Aorta (tissue), 5 donors: ENCODE measurements at regions of chr15 and their contacts with region 1.

Region 1: DNA sequence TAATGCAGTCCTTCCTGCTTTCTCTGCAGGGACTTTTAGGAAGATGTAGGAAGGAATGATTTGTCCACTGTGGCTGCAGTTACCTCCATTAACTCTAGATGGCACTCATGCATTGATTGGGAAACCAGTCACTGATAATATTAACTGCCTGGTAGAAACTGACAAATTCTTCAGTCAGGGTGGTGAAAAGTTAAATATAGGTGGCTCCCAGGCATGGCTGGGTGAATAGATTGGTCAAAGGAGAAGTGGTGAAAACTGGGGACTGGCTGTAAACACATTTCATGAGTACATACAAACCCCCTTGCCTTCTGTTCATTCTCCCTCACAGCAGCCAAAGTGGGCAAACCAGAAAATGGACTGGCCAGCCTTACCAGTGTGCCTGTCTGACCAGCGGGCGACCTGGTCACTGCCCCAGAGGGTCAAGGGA is 333.4 kb downstream of the THSD4 start:
- DNase-seq: no peak
- ATAC-seq: peak; percentile 80
- H3K4me3 ChIP-seq: no peak overlapping the region
- H3K27ac ChIP-seq: no peak overlapping the region
- H3K4me1 ChIP-seq: peaks cover 0 to 5% of the 10 kb centered on the region in 2 donors
- H3K27me3 ChIP-seq: no peaks in the 10 kb centered on the region

Region 2: DNA sequence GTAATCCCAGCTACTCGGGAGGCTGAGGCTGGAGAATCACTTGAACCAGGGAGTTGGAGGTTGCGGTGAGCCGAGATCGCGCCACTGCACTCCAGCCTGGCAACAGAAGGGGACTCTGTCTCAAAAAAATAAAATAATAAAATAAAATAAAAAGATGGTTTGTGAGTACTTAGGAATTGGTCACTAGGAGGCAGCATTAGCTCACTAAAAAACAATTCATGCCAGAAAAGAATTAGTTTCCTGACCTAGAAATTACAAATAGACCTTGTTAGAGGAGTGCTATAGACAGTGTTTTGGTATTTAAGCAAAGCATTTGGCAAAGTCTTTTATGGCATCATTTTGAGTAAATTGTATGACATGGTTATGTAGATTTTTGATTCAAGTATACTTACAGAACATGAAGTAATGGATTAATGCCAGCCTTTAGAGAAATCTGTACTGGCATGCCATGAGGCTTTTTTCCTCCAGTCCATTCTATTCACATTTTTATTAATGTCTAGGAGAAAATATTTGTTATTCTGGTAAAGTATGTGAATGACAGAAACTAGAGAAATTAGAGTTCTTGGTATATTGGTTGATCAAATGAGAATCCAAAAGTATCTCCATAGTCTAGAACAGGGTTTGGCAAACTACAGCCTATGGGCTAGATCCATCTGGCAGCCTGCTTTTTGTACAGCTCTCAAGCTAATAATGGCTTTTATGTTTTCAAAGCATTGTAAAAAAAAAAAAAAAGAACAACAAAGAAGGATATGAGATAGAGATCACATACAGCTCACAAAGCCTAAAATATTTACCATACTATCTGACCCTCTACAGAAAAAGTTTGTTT is 474.5 kb before region 1 on chr15:
- intact Hi-C with region 1: loop called in 1 of 2 experiments (anchors 10 kb)
- DNase-seq: no peak
- ATAC-seq: no peak
- H3K4me3 ChIP-seq: no peak overlapping the region
- H3K27ac ChIP-seq: no peak overlapping the region
- H3K4me1 ChIP-seq: no peaks in the 10 kb centered on the region
- H3K27me3 ChIP-seq: no peaks in the 10 kb centered on the region

Region 3: GRCh38 chr15:71011503-71012155 is 437.1 kb before region 1 on chr15:
- intact Hi-C with region 1: loop called in 1 of 2 experiments (anchors 10 kb)
- DNase-seq: no peak
- ATAC-seq: no peak
- H3K4me3 ChIP-seq: no peak overlapping the region
- H3K27ac ChIP-seq: no peak overlapping the region
- H3K4me1 ChIP-seq: no peaks in the 10 kb centered on the region
- H3K27me3 ChIP-seq: no peaks in the 10 kb centered on the region

Region 4: GRCh38 chr15:71465131-71465530 is 16.4 kb after region 1 on chr15:
- intact Hi-C with region 1: no loop called
- DNase-seq: no peak
- ATAC-seq: no peak
- H3K4me3 ChIP-seq: no peak overlapping the region
- H3K27ac ChIP-seq: no peak overlapping the region
- H3K4me1 ChIP-seq: no peaks in the 10 kb centered on the region
- H3K27me3 ChIP-seq: no peaks in the 10 kb centered on the region

Region 5: DNA sequence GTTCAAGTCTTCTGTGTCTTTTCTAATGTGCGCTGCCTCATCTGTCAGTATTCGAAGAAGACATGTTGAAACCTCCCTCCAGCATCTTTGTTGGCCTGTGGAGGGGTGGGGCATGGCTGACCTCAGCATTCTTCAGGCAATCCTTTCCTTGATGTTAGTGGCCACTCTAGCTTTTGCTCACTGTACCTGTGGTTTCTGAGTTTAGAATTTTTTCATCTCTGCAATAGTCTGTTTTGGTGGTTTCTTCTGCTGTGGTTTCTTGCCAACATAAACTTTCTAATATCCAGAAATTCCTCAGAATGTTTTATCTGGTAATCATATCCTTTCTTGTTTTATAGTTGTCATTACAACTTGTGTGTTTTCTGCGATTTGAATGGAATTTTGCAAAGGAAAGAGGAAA is 110.4 kb after region 1 on chr15:
- intact Hi-C with region 1: no loop called
- DNase-seq: no peak
- ATAC-seq: no peak
- H3K4me3 ChIP-seq: no peak overlapping the region
- H3K27ac ChIP-seq: no peak overlapping the region
- H3K4me1 ChIP-seq: peaks cover 0 to 2% of the 10 kb centered on the region in 2 donors
- H3K27me3 ChIP-seq: no peaks in the 10 kb centered on the region

Region 6: DNA sequence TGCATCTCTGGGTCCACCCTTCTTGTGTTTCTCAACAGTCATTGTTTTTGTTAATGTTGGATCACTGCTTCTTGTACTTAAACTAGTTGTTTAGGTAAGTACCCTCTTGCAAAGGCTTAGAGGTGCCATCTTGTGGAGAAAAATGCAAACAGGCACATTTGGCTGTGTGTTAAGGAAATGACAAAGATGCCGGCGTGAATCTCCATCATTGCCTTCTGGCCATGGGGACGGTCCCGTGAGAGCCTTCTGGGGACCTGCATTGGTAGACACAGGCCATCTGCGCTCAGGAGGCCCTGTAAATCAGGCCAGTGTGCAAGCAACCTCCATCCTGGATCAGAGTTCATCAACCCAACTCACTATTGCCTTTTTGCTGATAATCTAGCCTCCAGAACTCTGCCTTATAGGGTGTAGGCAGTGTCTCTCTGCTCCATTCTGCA is 203.1 kb after region 1 on chr15:
- intact Hi-C with region 1: loop called (anchors 2 to 5 kb)
- DNase-seq: no peak
- ATAC-seq: peak; percentile 34
- H3K4me3 ChIP-seq: no peak overlapping the region
- H3K27ac ChIP-seq: no peak overlapping the region
- H3K4me1 ChIP-seq: peaks cover 7 to 10% of the 10 kb centered on the region in 2 donors
- H3K27me3 ChIP-seq: no peaks in the 10 kb centered on the region

Region 7: DNA sequence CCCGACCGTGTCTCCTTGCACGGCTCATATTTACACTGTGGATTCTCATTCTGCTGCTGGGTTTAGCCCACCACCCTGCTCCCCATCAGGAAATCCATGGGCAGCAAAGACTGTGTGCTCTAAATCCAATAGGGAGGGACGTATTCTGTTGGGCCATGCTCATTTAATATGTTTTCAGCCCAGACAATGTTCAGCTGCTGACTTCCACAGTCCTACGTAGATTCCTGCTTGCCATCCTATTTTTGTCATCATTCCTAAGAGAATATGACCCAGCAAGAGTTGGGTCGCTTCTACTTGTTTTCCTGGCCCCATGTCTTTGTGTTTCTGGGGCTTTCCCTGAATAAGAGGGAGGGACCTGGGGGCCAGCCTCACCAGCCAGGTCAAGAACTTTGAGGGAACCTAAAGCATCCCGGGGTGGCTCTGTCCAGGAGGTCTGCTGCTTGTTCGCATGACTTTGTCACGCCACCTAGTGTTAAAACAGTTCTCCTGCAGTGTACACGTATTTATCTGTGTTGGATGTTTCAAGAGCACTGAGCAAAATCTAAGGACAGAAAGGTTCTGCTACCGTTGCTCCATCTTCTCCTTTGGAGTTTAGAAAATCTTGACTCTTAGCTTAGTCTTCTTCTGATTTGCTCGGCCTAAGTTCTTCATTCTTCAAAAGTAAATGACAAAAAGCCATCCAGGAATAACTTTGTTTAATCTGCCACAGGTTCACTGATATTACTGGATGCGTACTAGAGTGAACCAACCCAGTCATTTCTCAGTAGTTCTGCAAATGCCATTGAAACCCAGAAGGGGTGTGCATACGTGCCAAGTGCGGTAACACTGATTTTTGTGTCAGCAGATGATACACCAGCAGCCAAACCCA is 281.8 kb after region 1 on chr15:
- intact Hi-C with region 1: loop called (anchors 2 to 5 kb)
- DNase-seq: no peak
- ATAC-seq: peak; percentile 84
- H3K4me3 ChIP-seq: no peak overlapping the region
- H3K27ac ChIP-seq: no peak overlapping the region
- H3K4me1 ChIP-seq: peaks cover 0 to 10% of the 10 kb centered on the region in 2 donors
- H3K27me3 ChIP-seq: no peaks in the 10 kb centered on the region

Region 8: GRCh38 chr15:71800835-71801745 is 352.4 kb after region 1 on chr15:
- intact Hi-C with region 1: loop called (anchors 2 kb)
- DNase-seq: no peak
- ATAC-seq: peak; percentile 87
- H3K4me3 ChIP-seq: no peak overlapping the region
- H3K27ac ChIP-seq: no peak overlapping the region
- H3K4me1 ChIP-seq: no peaks in the 10 kb centered on the region
- H3K27me3 ChIP-seq: no peaks in the 10 kb centered on the region